SK-N-SH (cell line): ENCODE measurements at regions of chr11 and their contacts with region 1.

Region 1: DNA sequence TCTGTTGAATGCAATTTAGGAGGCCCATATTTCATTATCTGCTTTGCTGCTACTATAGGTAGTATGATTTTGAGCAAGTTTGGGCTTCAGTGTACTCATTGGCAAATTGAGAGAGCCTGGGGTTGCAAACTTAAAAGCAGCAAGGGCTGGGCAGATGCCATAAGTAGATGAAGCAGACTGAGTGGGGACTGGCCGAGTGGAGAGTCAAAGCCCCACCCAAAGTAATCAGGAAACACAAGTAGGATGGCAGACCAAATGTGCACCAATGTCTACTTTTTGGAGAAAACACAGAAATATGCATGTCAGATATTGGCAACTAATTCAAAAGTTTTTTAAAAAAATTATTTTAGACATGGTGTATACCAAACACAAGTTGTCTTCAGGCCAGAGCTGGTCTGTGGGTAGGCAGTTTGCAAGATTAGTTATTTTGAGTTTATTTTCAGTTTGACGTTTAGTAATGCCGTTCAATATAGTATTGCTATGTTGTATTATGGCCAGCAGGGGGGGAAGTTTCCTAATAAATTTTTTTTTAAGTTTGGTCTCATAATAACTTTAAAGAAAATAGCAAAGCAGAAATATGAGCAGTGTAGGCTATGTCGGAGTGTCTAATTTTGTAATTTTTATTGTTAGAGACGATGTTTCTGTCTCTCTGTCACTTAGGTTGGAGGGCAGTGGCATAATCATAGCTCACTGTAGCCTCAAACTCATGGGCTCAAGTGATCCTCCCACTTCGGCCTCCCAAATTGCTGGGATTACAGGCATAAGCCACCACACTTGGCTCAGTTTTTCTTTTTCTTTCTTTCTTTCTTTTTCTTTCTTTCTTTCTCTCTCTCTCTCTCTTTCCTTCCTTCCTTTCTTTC is 105.1 kb downstream of the HIPK3 start:
- DNase-seq: no peak
- H3K4me3 ChIP-seq: no peak overlapping the region; a peak in 1 of 4 replicates
- H3K27ac ChIP-seq: 0 out of 4 replicates have a peak overlapping the region, but pooled peaks of 1 of the 2 experiments have one; percentile 25
- H3K4me1 ChIP-seq: no peaks in the 10 kb centered on the region; a peak in 2 of 4 replicates
- H3K27me3 ChIP-seq: no peaks in the 10 kb centered on the region
- CTCF ChIP-seq: peak; percentile 75
- EP300 ChIP-seq: no peak
- RAD21 ChIP-seq: peak; percentile 79

Region 2: GRCh38 chr11:33161120-33162005 is 200.9 kb before region 1 on chr11 and contains the start of gene CSTF3:
- CTCF ChIA-PET with region 1: interaction called, 14 read pairs
- POLR2A ChIA-PET with region 1: no interaction called
- DNase-seq: peak; percentile 93
- H3K4me3 ChIP-seq: peak within 1 kb of the TSS; percentile 77 to 86
- H3K27ac ChIP-seq: peak within 1 kb of the TSS; percentile 84 to 88
- H3K4me1 ChIP-seq: peaks cover 2 to 31% of the 10 kb centered on the region in 2 experiments; a peak in 3 of 4 replicates
- H3K27me3 ChIP-seq: no peaks in the 10 kb centered on the region
- CTCF ChIP-seq: no peak; the same call in 1 of the 2 replicates
- EP300 ChIP-seq: peak; percentile 36 to 38; a peak in 2 of 4 replicates
- RAD21 ChIP-seq: no peak
- polyA plus RNA-seq, gene CSTF3: 26.3 and 34.6 TPM in 2 replicates

Region 3: DNA sequence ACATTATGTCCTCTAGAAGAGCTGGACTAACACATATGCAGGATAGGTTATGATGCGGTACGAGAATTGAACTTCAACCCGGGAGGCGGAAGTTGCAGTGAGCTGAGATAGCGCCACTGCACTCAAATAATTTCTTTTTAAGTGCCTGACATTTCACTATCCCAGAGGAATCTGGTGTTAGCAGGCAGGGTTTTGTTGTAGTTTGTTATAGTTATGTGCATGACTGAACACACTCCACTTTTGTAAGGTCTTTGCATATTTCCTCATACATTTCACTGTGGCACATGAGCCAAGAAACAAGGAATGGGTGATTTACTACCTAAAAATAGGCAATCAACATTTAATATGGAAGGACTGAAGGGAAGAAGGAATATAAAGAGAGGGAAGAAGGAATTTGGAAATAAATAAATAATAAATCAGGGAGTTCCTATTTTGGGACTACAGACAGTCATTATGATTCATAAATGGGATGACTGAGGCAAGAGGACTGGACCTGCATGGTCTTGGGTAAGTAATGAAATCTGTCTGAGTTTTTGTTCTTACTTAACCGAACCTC is 113.8 kb before region 1 on chr11:
- CTCF ChIA-PET with region 1: no interaction called
- POLR2A ChIA-PET with region 1: no interaction called
- DNase-seq: no peak
- H3K4me3 ChIP-seq: no peak overlapping the region
- H3K27ac ChIP-seq: no peak overlapping the region
- H3K4me1 ChIP-seq: peaks cover 0 to 5% of the 10 kb centered on the region in 2 experiments; a peak in 1 of 4 replicates
- H3K27me3 ChIP-seq: no peaks in the 10 kb centered on the region
- CTCF ChIP-seq: no peak
- EP300 ChIP-seq: no peak
- RAD21 ChIP-seq: no peak

Region 4: GRCh38 chr11:33344611-33345010 is 17.7 kb before region 1 on chr11:
- CTCF ChIA-PET with region 1: interaction called, 12 read pairs
- POLR2A ChIA-PET with region 1: no interaction called
- DNase-seq: no peak
- H3K4me3 ChIP-seq: no peak overlapping the region
- H3K27ac ChIP-seq: no peak overlapping the region
- H3K4me1 ChIP-seq: no peaks in the 10 kb centered on the region; a peak in 1 of 4 replicates
- H3K27me3 ChIP-seq: no peaks in the 10 kb centered on the region
- CTCF ChIP-seq: 0 out of 2 replicates have a peak, but pooled peaks have one; percentile 17
- EP300 ChIP-seq: no peak
- RAD21 ChIP-seq: peak; percentile 28; the same call in 1 of the 2 replicates

Region 5: DNA sequence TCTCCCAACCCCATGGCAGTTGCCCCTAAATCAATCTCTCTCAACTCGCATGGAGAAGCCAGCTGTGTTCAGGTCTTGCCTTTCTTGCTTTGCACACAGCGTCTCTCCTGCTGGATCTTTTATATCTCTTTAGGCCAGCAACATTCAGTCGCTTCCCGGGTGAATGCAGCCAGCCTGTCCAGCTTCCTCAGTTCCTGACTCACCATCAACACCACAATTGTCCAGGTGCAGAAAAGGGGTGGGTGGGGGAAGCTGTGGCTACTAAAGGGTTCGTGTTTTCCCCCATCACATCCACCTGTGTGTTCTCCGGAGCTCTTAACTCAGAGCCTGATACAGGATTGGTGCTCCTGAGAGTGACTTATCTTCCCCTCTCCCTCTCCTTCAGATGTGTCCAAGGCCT is 11.4 kb after region 1 on chr11:
- CTCF ChIA-PET with region 1: interaction called, 10 read pairs
- POLR2A ChIA-PET with region 1: no interaction called
- DNase-seq: no peak
- H3K4me3 ChIP-seq: no peak overlapping the region
- H3K27ac ChIP-seq: peak overlapping the region in 1 of 2 experiments; percentile 94; a peak in 2 of 4 replicates
- H3K4me1 ChIP-seq: peaks cover 7 to 60% of the 10 kb centered on the region in 2 experiments; a peak in 3 of 4 replicates
- H3K27me3 ChIP-seq: no peaks in the 10 kb centered on the region
- CTCF ChIP-seq: no peak
- EP300 ChIP-seq: no peak
- RAD21 ChIP-seq: no peak

Region 6: DNA sequence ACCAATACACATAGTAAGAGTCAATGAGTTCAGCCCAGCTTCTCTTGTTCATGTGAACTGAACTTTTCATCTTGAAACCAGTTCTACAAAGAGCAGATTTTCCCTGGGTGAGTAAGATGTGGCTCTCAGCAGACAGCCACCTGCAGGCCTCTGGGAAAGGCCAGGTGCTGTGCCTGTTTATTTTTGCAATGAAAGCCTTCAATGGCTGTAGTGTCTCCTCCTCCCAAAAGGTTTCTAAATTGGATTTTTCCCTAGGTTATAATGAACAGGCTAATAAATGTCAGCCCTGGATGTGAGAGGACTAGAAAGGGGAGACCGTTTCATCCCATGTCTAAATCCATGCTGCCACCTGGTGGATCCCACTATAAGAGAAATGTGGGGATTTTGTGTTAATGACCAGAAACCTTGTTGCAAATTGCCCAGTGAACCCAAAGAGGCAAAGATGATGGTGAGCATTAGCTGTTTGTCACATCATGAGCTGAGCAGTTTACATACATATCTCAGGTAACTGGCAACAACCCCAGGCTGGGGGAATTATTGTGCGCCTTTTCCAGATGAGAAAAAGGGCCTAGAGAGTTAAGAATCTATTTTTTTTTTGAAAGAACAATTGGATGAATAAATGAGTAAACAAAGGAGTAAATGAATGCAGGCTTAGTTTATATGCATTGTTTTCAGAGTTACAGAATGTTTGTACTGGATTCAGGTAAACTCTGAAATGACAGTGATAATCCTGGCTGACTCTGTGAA is 325.6 kb after region 1 on chr11:
- CTCF ChIA-PET with region 1: interaction called, 185 read pairs
- POLR2A ChIA-PET with region 1: no interaction called
- DNase-seq: peak; percentile 71
- H3K4me3 ChIP-seq: no peak overlapping the region; a peak in 1 of 4 replicates
- H3K27ac ChIP-seq: peak overlapping the region in 1 of 2 experiments; percentile 100; a peak in 2 of 4 replicates
- H3K4me1 ChIP-seq: peaks cover 12 to 45% of the 10 kb centered on the region in 2 experiments
- H3K27me3 ChIP-seq: no peaks in the 10 kb centered on the region
- CTCF ChIP-seq: peak; percentile 88
- EP300 ChIP-seq: no peak
- RAD21 ChIP-seq: peak; percentile 98